Naive thymus-derived CD4-positive, alpha-beta T cell (primary cell): ENCODE measurements at regions of chr9 and their contacts with region 1.

Region 1: DNA sequence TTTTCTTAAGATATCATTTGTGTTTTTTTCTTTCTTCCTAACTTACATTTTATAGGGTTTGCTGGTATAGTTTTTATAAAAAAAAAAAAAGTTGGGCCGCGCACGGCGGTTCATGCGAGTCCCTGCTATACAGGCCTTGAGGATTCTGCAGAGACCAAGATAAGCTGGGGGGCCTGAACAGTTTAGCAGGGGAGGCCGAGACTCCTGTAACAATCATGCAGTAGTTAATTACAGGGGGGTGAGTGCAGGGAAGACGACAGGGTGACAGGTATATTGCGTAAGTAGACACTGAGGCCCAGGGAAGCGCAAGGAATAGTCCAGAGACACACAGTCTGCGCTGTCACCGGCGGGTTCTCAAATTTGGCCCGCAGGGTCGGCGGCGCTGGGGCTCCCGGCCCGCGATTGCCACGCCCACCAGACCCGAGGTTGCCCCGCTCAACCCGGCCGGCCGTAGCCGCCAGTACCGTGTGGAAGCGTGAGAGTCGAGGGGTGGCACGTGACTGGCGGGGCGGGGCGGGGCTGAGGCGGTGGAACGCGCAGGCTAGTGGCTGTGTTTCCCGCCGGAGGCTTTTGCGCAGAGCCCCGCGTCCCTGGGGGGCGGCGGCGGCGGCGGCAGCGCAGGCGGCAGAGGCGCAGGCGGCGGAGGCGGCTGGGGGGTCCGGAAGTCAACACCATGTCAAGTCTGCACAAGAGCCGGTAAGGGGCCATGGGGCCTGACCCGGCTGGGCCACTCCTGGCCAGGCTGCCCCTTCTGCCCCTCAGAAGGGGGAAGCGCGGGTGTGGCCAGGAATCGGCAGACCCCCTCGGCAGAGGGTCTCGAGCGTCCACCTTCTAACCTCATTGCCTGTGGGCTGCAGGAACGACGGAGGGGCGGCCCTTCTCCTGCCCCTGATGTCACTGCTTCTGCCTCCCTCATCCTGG is at the start of gene TBC1D13:
- DNase-seq: peak; percentile 88 to 93 (median 92)
- ATAC-seq: peak; percentile 99
- H3K4me3 ChIP-seq: peak within 1 kb of the TSS; percentile 90
- H3K4me3 Mint-ChIP-seq: peak within 1 kb of the TSS; percentile 80 to 98 (median 92)
- H3K27ac ChIP-seq: peak within 1 kb of the TSS; percentile 82
- H3K27ac Mint-ChIP-seq: peak within 1 kb of the TSS; percentile 87 to 98 (median 95)
- H3K4me1 ChIP-seq: peaks cover 13% of the 10 kb centered on the region in 2 donors
- H3K4me1 Mint-ChIP-seq: peaks cover 6 to 29% (median 23%) of the 10 kb centered on the region in 7 donors
- H3K27me3 ChIP-seq: no peaks in the 10 kb centered on the region
- H3K27me3 Mint-ChIP-seq: no peaks in the 10 kb centered on the region
- total RNA-seq, gene TBC1D13: 21.0 to 35.2 (median 24.9) TPM

Region 2: DNA sequence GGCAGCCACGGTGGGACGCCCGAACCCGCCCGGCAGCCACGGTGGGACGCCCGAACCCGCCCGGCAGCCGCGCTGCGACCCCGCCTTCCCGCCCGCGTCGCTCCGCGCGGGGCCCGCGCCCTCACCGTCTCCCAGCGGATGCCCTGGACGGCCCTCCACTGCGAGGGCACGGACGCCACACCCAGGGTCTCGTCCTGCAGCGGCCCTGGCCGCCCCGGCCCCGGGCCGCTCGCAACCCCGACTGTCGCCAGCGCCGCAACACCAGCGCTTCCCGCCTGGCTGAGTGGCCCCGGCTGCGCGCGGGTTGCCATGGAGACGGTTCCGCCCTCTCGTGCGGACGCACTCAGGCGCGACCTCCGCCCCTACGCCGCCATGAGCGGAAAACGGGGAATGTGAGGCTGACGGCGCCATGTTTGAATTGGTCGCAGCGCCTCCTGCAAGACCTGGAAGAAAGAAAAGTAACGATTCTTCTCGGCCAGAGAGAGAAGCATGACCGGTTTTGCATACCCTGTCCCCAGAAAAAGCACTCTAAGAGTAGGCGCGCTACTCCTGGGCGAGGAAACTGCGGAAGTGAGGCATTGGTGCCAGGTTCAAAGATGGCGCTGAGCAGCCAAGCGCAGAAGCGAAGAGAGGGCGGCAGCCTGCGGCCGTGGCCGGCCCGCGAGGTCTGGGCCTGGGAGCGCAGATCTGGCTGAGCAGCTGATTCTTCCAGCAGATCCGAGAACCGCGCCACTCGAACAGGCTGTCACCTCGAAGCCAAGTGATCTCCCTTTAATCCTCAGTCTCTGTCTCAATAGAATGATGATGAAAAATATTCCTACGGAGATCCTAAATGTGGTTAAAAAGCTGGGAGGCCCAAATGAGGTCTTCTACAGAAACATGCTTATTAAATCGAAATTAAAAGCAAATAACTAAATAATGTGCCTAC is 130.3 kb before region 1 on chr9 and contains the start of gene DYNC2I2:
- CTCF ChIA-PET with region 1: no interaction called
- POLR2A ChIA-PET with region 1: no interaction called
- intact Hi-C with region 1: loop called in 1 of 2 experiments (anchors 1 kb)
- DNase-seq: peak; percentile 91 to 96 (median 96)
- ATAC-seq: peak; percentile 98
- H3K4me3 ChIP-seq: peak within 1 kb of the TSS; percentile 96
- H3K4me3 Mint-ChIP-seq: peak within 1 kb of the TSS; percentile 88 to 98 (median 94)
- H3K27ac ChIP-seq: peak within 1 kb of the TSS; percentile 99
- H3K27ac Mint-ChIP-seq: peak within 1 kb of the TSS; percentile 95 to 100 (median 99)
- H3K4me1 ChIP-seq: peaks cover 3 to 9% of the 10 kb centered on the region in 2 donors
- H3K4me1 Mint-ChIP-seq: peaks cover 0 to 14% (median 7%) of the 10 kb centered on the region in 7 donors
- H3K27me3 ChIP-seq: no peaks in the 10 kb centered on the region
- H3K27me3 Mint-ChIP-seq: no peaks in the 10 kb centered on the region
- total RNA-seq, gene DYNC2I2: 2.5 to 41.7 (median 3.8) TPM

Region 3: GRCh38 chr9:128702445-128702948 is 84.4 kb before region 1 on chr9 and contains the start of gene PKN3:
- CTCF ChIA-PET with region 1: no interaction called
- POLR2A ChIA-PET with region 1: interaction called, 3 read pairs
- intact Hi-C with region 1: loop called (anchors 5 kb)
- DNase-seq: peak; percentile 63 to 95 (median 82)
- ATAC-seq: peak; percentile 94
- H3K4me3 ChIP-seq: peak within 1 kb of the TSS; percentile 68
- H3K4me3 Mint-ChIP-seq: peak within 1 kb of the TSS; percentile 84 to 94 (median 91)
- H3K27ac ChIP-seq: peak within 1 kb of the TSS; percentile 60
- H3K27ac Mint-ChIP-seq: peak within 1 kb of the TSS; percentile 52 to 91 (median 79)
- H3K4me1 ChIP-seq: no peaks in the 10 kb centered on the region
- H3K4me1 Mint-ChIP-seq: peaks cover 4 to 17% (median 10%) of the 10 kb centered on the region in 7 donors
- H3K27me3 ChIP-seq: no peaks in the 10 kb centered on the region
- H3K27me3 Mint-ChIP-seq: no peaks in the 10 kb centered on the region
- total RNA-seq, gene PKN3: 1.1 to 11.7 (median 1.6) TPM

Region 4: DNA sequence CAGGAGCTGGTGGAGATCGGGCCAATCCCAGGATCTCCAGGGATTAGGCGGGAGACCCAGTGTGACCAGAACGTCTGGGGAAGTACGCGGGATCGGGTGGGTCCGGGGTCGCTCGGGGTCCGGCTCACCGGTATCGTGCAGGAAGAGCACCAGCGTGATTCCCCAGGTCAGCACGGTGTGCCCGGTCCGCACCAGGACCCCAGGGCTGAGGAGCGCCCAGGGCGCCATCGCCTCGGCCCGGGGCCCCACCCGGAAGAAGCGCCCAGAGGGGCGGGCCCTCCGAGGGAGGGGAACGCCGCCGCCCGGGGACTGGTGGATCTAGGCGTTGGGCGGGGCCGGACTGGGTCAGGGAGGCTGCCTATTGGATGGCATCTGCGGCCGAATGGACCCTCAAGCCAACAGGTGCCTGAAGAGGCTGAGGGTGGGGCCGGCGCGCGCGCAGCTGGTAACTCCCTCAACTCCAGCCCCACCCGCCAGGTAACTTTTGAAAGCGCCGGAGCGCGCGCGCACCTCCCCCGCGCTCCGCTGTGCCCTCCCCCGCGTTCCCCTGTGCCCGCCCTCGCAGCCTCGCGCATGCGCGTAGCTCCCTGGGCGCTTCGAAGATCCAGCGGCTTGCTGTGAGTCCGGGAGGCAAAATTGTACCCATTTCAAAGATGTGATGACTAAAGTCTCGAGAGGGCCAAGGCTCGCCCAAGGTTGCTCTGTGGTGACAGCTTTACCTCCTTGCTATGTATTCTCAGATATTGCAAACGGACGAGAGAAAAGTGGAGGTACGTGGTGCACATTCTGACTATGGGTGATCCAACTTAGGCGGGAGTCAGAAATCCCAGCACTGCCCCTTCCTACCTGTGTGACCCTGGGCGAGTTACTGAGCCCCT is 62.8 kb before region 1 on chr9 and contains the start of gene ZDHHC12:
- CTCF ChIA-PET with region 1: no interaction called
- POLR2A ChIA-PET with region 1: interaction called, 7 read pairs
- intact Hi-C with region 1: loop called (anchors 1 kb)
- DNase-seq: peak; percentile 96 to 99 (median 99)
- ATAC-seq: peak; percentile 97
- H3K4me3 ChIP-seq: peak within 1 kb of the TSS; percentile 97
- H3K4me3 Mint-ChIP-seq: peak within 1 kb of the TSS; percentile 85 to 97 (median 94)
- H3K27ac ChIP-seq: peak within 1 kb of the TSS; percentile 89
- H3K27ac Mint-ChIP-seq: peak within 1 kb of the TSS; percentile 85 to 96 (median 94)
- H3K4me1 ChIP-seq: peaks cover 13 to 29% of the 10 kb centered on the region in 2 donors
- H3K4me1 Mint-ChIP-seq: peaks cover 23 to 46% (median 39%) of the 10 kb centered on the region in 7 donors
- H3K27me3 ChIP-seq: no peaks in the 10 kb centered on the region
- H3K27me3 Mint-ChIP-seq: no peaks in the 10 kb centered on the region
- total RNA-seq, gene ZDHHC12: 21.2 to 70.3 (median 25.7) TPM

Region 5: DNA sequence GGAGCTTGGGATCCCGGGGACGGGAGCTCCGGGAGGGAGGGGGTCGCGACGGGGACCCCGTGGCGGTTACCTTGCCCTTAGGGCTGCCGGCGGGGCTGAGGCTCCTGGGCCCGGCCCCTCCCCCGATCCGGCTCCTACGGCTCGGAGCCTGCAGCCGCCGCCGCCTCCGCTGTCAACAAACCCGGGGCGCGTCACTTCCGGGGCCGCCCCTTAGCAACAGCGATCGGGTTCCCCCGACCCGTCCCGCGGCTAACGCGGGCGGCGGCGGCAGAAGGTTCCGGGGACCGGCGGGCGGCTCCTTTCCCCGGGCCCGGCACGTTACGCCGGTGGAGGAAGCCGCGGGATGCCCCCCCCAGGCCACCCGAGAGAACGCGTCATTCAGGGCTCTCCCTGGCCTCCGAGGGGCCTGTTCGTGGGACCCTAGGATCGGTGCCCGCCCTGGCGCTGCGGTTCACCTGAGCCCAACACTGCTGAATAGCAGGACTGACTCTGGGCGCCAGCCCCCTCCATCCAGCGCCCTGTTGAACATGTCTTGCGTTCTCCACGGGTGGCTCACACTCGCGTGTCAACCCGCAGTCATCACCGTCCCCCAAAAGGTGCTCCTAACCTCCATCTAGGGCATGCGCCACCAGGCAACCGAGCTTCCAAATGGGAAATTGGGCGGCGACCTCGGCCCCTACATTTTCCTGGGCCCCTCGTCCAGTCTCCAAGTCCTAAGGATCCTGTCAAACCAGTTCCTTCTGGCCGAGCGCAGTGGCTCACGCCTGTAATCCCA is 15.0 kb before region 1 on chr9 and contains the start of gene ZER1:
- CTCF ChIA-PET with region 1: no interaction called
- POLR2A ChIA-PET with region 1: interaction called, 31 read pairs
- intact Hi-C with region 1: loop called (anchors 1 kb)
- DNase-seq: peak; percentile 92 to 98 (median 95)
- ATAC-seq: peak; percentile 97
- H3K4me3 ChIP-seq: peak within 1 kb of the TSS; percentile 97
- H3K4me3 Mint-ChIP-seq: peak within 1 kb of the TSS; percentile 95 to 99 (median 98)
- H3K27ac ChIP-seq: peak within 1 kb of the TSS; percentile 93
- H3K27ac Mint-ChIP-seq: peak within 1 kb of the TSS; percentile 93 to 100 (median 100)
- H3K4me1 ChIP-seq: peaks cover 7 to 12% of the 10 kb centered on the region in 2 donors
- H3K4me1 Mint-ChIP-seq: peaks cover 21 to 40% (median 39%) of the 10 kb centered on the region in 7 donors
- H3K27me3 ChIP-seq: no peaks in the 10 kb centered on the region
- H3K27me3 Mint-ChIP-seq: no peaks in the 10 kb centered on the region
- total RNA-seq, gene ZER1: 22.7 to 51.2 (median 34.7) TPM

Region 6: GRCh38 chr9:128807827-128808226 is 20.9 kb after region 1 on chr9:
- CTCF ChIA-PET with region 1: no interaction called
- POLR2A ChIA-PET with region 1: interaction called, 11 read pairs
- intact Hi-C with region 1: no loop called
- DNase-seq: no peak
- ATAC-seq: no peak
- H3K4me3 ChIP-seq: no peak overlapping the region
- H3K4me3 Mint-ChIP-seq: no peak overlapping the region
- H3K27ac ChIP-seq: no peak overlapping the region
- H3K27ac Mint-ChIP-seq: no peak overlapping the region
- H3K4me1 ChIP-seq: no peaks in the 10 kb centered on the region
- H3K4me1 Mint-ChIP-seq: peaks cover 0 to 3% (median 0%) of the 10 kb centered on the region in 7 donors
- H3K27me3 ChIP-seq: no peaks in the 10 kb centered on the region
- H3K27me3 Mint-ChIP-seq: no peaks in the 10 kb centered on the region

Region 7: DNA sequence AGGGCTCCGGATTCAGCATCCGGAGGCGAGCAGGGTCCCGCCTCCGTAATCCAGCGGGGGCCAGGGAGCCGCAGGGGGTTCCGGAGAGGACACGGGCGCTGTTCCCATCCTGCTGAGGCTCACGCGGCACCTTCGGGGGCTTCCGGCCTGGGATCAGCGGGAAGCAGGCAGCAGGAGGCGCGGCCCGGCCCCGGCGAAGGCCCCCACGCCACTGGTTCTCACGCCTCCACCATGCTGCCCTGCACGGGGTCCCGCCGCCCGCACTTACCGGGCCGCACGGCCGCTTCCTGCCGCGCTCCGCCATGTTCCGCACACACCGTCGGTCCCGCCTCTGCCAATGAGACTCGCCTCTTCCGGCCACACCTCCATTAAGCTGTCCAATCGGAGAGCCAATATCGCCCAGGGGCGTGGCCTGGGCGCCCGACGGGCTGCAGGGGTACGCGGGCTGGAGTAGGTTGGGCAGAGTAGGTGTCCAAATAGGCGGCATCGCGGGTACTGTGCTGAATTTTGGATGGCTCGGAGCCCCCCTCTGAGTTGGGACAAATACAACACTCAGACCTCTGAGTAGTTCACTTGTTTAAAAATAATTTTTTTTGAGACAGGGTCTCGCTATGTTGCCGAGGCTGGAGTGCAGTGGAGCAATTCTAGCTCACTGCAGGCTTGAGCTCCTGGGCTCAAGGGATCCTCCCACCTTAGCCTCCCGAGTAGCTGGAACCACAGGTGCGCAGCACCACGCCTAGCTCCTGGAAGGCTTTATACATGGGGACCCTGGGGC is 42.7 kb after region 1 on chr9 and contains the start of gene SPOUT1:
- CTCF ChIA-PET with region 1: no interaction called
- POLR2A ChIA-PET with region 1: interaction called, 4 read pairs
- intact Hi-C with region 1: loop called (anchors 1 kb)
- DNase-seq: peak; percentile 86 to 95 (median 92)
- ATAC-seq: peak; percentile 100
- H3K4me3 ChIP-seq: peak within 1 kb of the TSS; percentile 91
- H3K4me3 Mint-ChIP-seq: peak within 1 kb of the TSS; percentile 92 to 99 (median 95)
- H3K27ac ChIP-seq: peak within 1 kb of the TSS; percentile 81
- H3K27ac Mint-ChIP-seq: peak within 1 kb of the TSS; percentile 91 to 97 (median 94)
- H3K4me1 ChIP-seq: peaks cover 8 to 15% of the 10 kb centered on the region in 2 donors
- H3K4me1 Mint-ChIP-seq: peaks cover 14 to 26% (median 19%) of the 10 kb centered on the region in 7 donors
- H3K27me3 ChIP-seq: no peaks in the 10 kb centered on the region
- H3K27me3 Mint-ChIP-seq: no peaks in the 10 kb centered on the region
- total RNA-seq, gene SPOUT1: 38.9 to 83.6 (median 65.2) TPM